ENCODE measurements at regions of chr14 and their contacts with region 1.

Region 1: DNA sequence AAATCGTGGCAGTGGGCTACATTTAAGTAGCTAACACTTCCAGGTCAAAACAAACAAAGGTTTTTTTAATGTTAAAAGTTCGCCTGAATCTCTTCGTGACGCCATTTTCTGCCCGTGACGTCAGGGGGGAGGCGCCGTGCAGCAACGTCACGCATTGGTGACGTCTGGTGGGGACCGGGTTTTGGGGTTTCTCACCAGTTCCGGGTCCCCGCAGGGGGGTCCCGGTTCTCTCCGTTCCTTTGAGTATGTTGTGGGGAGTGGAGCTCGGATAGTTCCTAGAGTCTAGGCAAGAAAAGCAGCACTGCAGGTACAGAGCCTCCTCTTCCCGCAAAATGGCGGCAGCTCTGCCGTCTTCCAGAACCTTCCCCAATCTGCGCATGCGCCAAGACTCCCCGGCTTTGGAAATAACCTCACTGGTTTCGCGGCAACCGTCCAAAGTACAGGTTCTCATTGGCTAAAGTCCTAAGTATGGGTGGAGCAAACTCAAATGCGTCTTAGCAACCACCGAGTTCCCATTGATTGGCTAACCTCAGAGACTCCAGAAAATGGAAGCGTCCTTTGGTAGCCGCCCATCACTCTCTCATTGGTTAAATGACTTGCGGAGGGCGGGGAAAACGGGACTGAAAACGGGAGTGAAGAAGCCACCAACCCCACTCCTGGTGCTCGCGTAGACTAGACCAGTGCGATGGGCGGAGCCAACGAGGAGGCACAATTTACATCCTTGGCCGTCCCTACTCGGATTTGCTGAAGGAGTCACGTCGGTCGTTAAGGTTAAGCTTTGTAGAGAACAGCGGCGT is at the start of gene RBM23:
- DNase-seq: peak; percentile 99 to 100 (median 100)
- ATAC-seq: peak; percentile 84 to 96 (median 88)
- H3K4me3 ChIP-seq: peak within 1 kb of the TSS; percentile 66 to 73 (median 70)
- H3K27ac ChIP-seq: peak within 1 kb of the TSS; percentile 98 to 100 (median 100)
- H3K4me1 ChIP-seq: peaks cover 0 to 29% (median 12%) of the 10 kb centered on the region in 4 donors
- H3K27me3 ChIP-seq: no peaks in the 10 kb centered on the region
- CTCF ChIP-seq: no peak
- POLR2A ChIP-seq: peak; percentile 74
- total RNA-seq, gene RBM23: 22.2 to 38.0 (median 34.0) TPM

Region 2: DNA sequence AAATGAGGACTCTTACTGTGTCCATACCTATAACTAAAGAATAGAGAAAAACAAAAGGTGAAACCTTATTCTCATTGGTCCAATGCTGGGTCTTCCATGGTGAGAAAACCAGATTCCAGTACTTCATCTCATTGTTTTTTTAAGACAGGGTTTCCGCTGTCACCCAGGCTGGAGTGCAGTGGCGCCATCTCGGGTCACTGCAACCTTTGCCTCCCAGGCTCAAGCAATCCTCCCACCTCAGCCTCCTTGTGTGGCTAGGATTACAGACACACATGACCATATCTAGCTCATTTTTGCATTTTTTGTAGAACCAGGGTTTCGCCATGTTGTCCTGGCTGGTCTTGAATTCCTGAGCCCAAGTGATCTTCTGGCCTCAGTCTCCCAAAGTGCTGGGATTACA is 13.4 kb before region 1 on chr14:
- intact Hi-C with region 1: loop called in 1 of 2 experiments (anchors 1 kb)
- DNase-seq: no peak
- ATAC-seq: no peak
- H3K4me3 ChIP-seq: no peak overlapping the region
- H3K27ac ChIP-seq: no peak overlapping the region
- H3K4me1 ChIP-seq: peaks cover 0 to 24% (median 12%) of the 10 kb centered on the region in 4 donors
- H3K27me3 ChIP-seq: no peaks in the 10 kb centered on the region
- CTCF ChIP-seq: no peak
- POLR2A ChIP-seq: no peak